Panc1 (cell line): ENCODE measurements at regions of chr19 and their contacts with region 1.

Region 1: GRCh38 chr19:2950286-2951124 is 5.7 kb upstream of the ZNF77 start:
- DNase-seq: peak; percentile 98
- ATAC-seq: peak; percentile 99
- H3K4me3 ChIP-seq: peak overlapping the region; percentile 76 to 95
- H3K27ac ChIP-seq: peak overlapping the region; percentile 96
- H3K4me1 ChIP-seq: peaks cover 5% of the 10 kb centered on the region; the same call in 1 of the 2 replicates
- H3K27me3 ChIP-seq: no peaks in the 10 kb centered on the region
- CTCF ChIP-seq: no peak

Region 2: GRCh38 chr19:2900296-2901252 is 49.9 kb before region 1 on chr19 and contains the start of gene ZNF57:
- CTCF ChIA-PET with region 1: no interaction called
- POLR2A ChIA-PET with region 1: no interaction called
- in situ Hi-C with region 1: no loop called
- intact Hi-C with region 1: no loop called
- DNase-seq: peak; percentile 88
- ATAC-seq: peak; percentile 98
- H3K4me3 ChIP-seq: peak within 1 kb of the TSS; percentile 72 to 75
- H3K27ac ChIP-seq: peak within 1 kb of the TSS; percentile 68
- H3K4me1 ChIP-seq: peaks cover 6% of the 10 kb centered on the region
- H3K27me3 ChIP-seq: no peaks in the 10 kb centered on the region
- CTCF ChIP-seq: no peak
- total RNA-seq, gene ZNF57: 4.9 TPM

Region 3: DNA sequence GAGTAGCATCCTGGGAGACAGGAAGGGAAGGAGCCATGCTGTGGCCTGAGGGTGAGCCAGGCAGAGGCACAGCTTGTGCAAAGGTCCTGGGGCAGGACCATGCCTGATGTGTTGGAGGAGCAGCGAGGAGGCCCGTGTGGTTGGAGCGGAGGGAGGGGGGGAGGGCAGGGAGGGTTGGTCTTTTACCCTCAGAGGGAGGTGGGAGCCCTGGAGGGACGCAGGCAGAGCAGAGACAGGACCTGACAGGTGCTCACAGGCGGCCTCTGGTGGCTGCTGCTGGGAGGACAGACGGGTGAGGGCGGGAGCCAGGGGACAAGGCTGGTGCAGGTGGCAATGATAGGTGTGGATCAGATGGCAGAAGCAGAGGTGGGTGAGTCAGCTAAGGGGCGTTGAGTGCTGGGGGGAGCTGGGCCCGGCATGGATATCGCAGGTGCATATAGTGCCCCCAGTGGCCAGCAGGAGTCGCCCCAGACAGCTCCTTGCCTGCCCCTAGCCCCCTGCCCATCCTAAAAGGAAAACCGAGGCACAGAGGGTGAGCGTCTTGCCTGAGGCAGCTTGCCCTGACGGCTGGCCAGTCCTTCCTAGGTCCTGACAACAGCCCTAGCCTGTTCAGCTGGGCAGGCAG is 175.5 kb after region 1 on chr19:
- CTCF ChIA-PET with region 1: interaction called, 4 read pairs
- POLR2A ChIA-PET with region 1: no interaction called
- in situ Hi-C with region 1: no loop called
- intact Hi-C with region 1: loop called (anchors 10 kb)
- DNase-seq: peak; percentile 24
- ATAC-seq: peak; percentile 88
- H3K4me3 ChIP-seq: no peak overlapping the region
- H3K27ac ChIP-seq: no peak overlapping the region
- H3K4me1 ChIP-seq: no peaks in the 10 kb centered on the region
- H3K27me3 ChIP-seq: no peaks in the 10 kb centered on the region
- CTCF ChIP-seq: peak; percentile 89

Region 4: GRCh38 chr19:3163230-3163886 is 212.9 kb after region 1 on chr19:
- CTCF ChIA-PET with region 1: no interaction called
- POLR2A ChIA-PET with region 1: interaction called, 3 read pairs
- in situ Hi-C with region 1: no loop called
- intact Hi-C with region 1: loop called (anchors 2 kb)
- DNase-seq: no peak
- ATAC-seq: peak; percentile 93
- H3K4me3 ChIP-seq: no peak overlapping the region
- H3K27ac ChIP-seq: no peak overlapping the region
- H3K4me1 ChIP-seq: no peaks in the 10 kb centered on the region; the same call in 1 of the 2 replicates
- H3K27me3 ChIP-seq: no peaks in the 10 kb centered on the region
- CTCF ChIP-seq: peak; percentile 93

Region 5: DNA sequence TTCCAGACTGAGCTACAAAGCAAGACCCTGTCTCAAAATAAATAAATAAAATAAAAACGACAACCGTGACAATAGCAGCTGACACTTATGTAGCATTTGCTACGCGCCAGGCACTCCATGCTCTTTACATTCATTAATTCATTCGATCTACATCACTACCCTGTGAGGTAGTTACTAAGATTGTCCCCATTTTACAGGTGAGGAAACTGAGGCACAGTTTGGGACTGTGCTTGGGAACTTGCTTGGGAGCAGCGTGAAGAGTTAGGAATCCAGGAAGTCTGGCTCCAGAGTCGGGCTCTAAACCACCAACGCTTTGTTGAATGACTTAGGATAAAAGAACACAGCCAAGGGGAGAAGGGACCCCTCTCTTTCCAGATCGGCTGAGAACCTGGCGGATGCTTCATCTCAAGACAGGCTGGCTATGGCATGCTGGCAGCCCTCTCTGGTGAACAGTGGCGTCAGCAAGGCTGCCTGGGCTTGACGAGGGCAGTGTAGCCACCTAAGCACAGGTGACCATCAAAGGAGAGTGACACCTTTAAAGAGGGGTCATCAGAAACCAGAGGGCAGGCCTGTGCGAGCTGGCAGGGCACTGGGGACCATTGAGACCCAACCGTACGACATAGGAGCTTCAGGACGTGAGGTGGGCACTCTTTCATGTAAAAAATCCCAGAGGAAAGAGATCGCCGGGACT is 549.4 kb after region 1 on chr19:
- CTCF ChIA-PET with region 1: no interaction called
- POLR2A ChIA-PET with region 1: interaction called, 10 read pairs
- in situ Hi-C with region 1: no loop called
- intact Hi-C with region 1: no loop called
- DNase-seq: no peak
- ATAC-seq: peak; percentile 36
- H3K4me3 ChIP-seq: peak overlapping the region; percentile 94 to 95
- H3K27ac ChIP-seq: peak overlapping the region; percentile 97
- H3K4me1 ChIP-seq: no peaks in the 10 kb centered on the region
- H3K27me3 ChIP-seq: no peaks in the 10 kb centered on the region
- CTCF ChIP-seq: no peak